Tibial artery (tissue), 4 donors: ENCODE measurements at regions of chr17 and their contacts with region 1.

Region 1: GRCh38 chr17:6893382-6894205 is 62.1 kb upstream of the TEKT1 start:
- DNase-seq: no peak
- H3K4me3 ChIP-seq: no peak overlapping the region
- H3K27ac ChIP-seq: no peak overlapping the region
- H3K4me1 ChIP-seq: peaks cover 0 to 7% (median 0%) of the 10 kb centered on the region in 4 donors
- H3K27me3 ChIP-seq: peaks cover 0 to 33% of the 10 kb centered on the region in 2 donors
- CTCF ChIP-seq: no peak

Region 2: DNA sequence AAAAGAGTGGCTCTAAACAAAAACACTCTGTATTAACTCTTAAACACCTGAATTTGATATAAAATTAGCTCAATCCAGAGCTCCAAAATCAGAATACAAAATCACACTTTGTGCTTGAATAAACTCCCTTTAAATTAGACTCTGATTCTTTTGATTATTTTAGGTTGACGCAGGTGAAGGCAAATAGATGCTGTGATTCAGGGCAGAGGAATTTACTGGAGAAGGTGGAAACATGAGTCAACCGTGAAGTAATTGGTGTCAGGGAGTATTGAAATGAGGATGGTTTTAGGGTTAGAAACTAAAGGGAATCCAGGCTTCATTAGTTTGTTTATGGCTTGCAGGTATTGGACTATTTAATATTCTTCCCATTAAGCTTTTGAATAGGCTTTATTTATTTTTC is 25.0 kb before region 1 on chr17:
- intact Hi-C with region 1: loop called (anchors 1 kb)
- DNase-seq: no peak
- H3K4me3 ChIP-seq: no peak overlapping the region
- H3K27ac ChIP-seq: no peak overlapping the region
- H3K4me1 ChIP-seq: no peaks in the 10 kb centered on the region
- H3K27me3 ChIP-seq: peaks cover 0 to 13% of the 10 kb centered on the region in 2 donors
- CTCF ChIP-seq: no peak